ENCODE measurements at regions of chr1 and their contacts with region 1.

Region 1: GRCh38 chr1:204128964-204129896 is 22.6 kb downstream of the ETNK2 start:
- DNase-seq: peak; percentile 60
- H3K4me3 ChIP-seq: peak overlapping the region; percentile 19
- H3K27ac ChIP-seq: no peak overlapping the region
- H3K4me1 ChIP-seq: peaks cover 3% of the 10 kb centered on the region
- H3K27me3 ChIP-seq: no peaks in the 10 kb centered on the region
- CTCF ChIP-seq: peak; percentile 73

Region 2: GRCh38 chr1:203871107-203871875 is 257.9 kb before region 1 on chr1:
- intact Hi-C with region 1: loop called (anchors 2 kb)
- DNase-seq: peak; percentile 24
- H3K4me3 ChIP-seq: no peak overlapping the region
- H3K27ac ChIP-seq: no peak overlapping the region
- H3K4me1 ChIP-seq: peaks cover 4% of the 10 kb centered on the region
- H3K27me3 ChIP-seq: no peaks in the 10 kb centered on the region
- CTCF ChIP-seq: peak; percentile 63

Region 3: GRCh38 chr1:204074274-204075138 is 54.7 kb before region 1 on chr1:
- intact Hi-C with region 1: loop called (anchors 5 kb)
- DNase-seq: peak; percentile 82
- H3K4me3 ChIP-seq: peak overlapping the region; percentile 54
- H3K27ac ChIP-seq: peak overlapping the region; percentile 94
- H3K4me1 ChIP-seq: no peaks in the 10 kb centered on the region
- H3K27me3 ChIP-seq: no peaks in the 10 kb centered on the region
- CTCF ChIP-seq: no peak

Measured in colonic mucosa (tissue), 4 donors.